Left colon (tissue), 2 donors: ENCODE measurements at regions of chr15 and their contacts with region 1.

Region 1: GRCh38 chr15:34616613-34617012 is 33.2 kb upstream of the GOLGA8B start:
- DNase-seq: no peak
- ATAC-seq: no peak

Region 2: DNA sequence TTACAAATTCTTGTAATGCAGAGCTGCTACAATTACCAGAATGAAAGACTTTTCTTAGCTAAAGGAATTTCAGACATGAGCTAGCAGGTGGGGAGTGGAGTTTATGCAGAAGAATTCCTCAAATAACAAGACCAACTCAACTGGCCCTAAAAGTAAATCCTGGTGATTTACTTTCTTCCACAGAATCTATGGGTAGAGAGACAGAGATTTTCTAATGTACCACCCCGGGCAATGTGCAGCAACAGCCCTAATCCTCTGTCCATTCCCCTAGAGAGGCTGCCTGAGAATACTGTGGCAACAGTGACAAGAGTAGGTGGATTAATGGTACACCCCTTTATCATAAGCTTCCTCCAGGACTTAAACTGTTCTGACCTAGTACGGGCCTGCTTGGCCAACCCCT is 297.7 kb after region 1 on chr15:
- intact Hi-C with region 1: loop called in 1 of 2 experiments (anchors 5 kb)
- DNase-seq: no peak
- ATAC-seq: no peak